ENCODE measurements at regions of chr11 and their contacts with region 1.

Region 1: GRCh38 chr11:45771566-45772448 is 33.1 kb upstream of the SLC35C1 start:
- DNase-seq: peak; percentile 90
- ATAC-seq: peak; percentile 96 to 97

Region 2: GRCh38 chr11:45339729-45340519 is 431.9 kb before region 1 on chr11:
- intact Hi-C with region 1: loop called in 1 of 2 experiments (anchors 2 kb)
- DNase-seq: peak; percentile 95
- ATAC-seq: peak; percentile 97

Region 3: GRCh38 chr11:45371251-45372115 is 400.3 kb before region 1 on chr11:
- intact Hi-C with region 1: loop called (anchors 1 to 10 kb)
- DNase-seq: peak; percentile 70
- ATAC-seq: peak; percentile 54 to 69

Region 4: GRCh38 chr11:45538363-45538762 is 233.4 kb before region 1 on chr11:
- intact Hi-C with region 1: loop called in 1 of 2 experiments (anchors 2 kb)
- DNase-seq: no peak
- ATAC-seq: peak; percentile 71 to 75

Region 5: GRCh38 chr11:45665206-45665932 is 106.4 kb before region 1 on chr11 and contains the start of gene CHST1:
- intact Hi-C with region 1: loop called (anchors 2 to 5 kb)
- DNase-seq: peak; percentile 62
- ATAC-seq: peak; percentile 89 to 92
- total RNA-seq, gene CHST1: 3.2 to 3.5 TPM

Measured in left cardiac atrium (tissue), 4 donors.